ENCODE measurements at regions of chr20 and their contacts with region 1.

Region 1: DNA sequence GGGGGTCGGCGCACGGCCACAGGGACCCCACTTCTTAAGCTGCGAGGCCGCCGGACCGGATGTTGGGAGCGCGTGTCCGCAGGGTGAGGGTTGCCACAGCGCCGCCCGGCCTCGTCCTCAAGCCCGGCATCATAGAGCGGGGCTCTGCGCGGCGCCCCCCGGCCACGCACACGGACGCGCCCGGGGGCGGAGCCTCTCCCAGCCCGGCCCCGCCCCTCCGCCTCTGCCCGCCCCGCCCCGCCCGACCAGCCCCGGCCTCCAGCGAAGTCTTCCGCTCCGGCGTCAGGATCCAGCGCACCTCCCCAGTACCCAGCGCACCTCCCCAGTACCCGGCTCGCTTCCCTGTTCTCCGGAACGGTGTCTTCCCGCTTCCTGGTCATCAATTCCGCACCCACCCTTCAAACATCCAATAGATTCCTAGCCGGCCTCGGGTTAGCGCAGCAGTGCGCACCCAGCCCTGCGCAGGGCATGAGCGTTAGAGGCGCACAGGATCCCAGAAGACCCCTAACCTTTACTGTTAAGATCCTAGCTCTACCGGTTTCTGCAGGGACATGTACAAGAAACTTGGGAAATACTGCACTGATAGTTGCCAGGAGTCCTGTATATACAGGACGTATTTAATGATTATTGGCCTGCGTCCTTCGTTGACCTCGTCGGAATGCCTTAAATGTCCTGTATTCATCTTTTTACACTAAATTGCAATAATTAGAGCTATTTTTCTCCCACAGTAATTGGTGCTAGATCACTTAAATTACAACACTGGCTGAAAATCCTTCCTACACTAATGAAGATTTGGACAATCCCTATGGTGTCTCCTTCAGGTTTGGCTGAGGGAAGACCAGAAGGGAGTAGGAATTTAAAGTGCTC is 535 bp upstream of the DNAAF9 start:
- DNase-seq: peak; percentile 63
- H3K4me3 Mint-ChIP-seq: peak overlapping the region; percentile 95
- H3K27ac Mint-ChIP-seq: peak overlapping the region; percentile 93
- H3K4me1 Mint-ChIP-seq: peaks cover 32% of the 10 kb centered on the region
- H3K27me3 Mint-ChIP-seq: peaks cover 26% of the 10 kb centered on the region

Region 2: GRCh38 chr20:1663917-1664316 is 1744.1 kb before region 1 on chr20:
- intact Hi-C with region 1: loop called (anchors 10 kb)
- DNase-seq: no peak
- H3K4me3 Mint-ChIP-seq: peak overlapping the region; percentile 55
- H3K27ac Mint-ChIP-seq: peak overlapping the region; percentile 85
- H3K4me1 Mint-ChIP-seq: peaks cover 96% of the 10 kb centered on the region
- H3K27me3 Mint-ChIP-seq: no peaks in the 10 kb centered on the region

Region 3: GRCh38 chr20:3383878-3384495 is 24.0 kb before region 1 on chr20:
- intact Hi-C with region 1: loop called (anchors 1 kb)
- DNase-seq: no peak
- H3K4me3 Mint-ChIP-seq: peak overlapping the region; percentile 12
- H3K27ac Mint-ChIP-seq: peak overlapping the region; percentile 49
- H3K4me1 Mint-ChIP-seq: peaks cover 17% of the 10 kb centered on the region
- H3K27me3 Mint-ChIP-seq: no peaks in the 10 kb centered on the region

Region 4: GRCh38 chr20:3420211-3420707 is 12.3 kb after region 1 on chr20:
- intact Hi-C with region 1: loop called (anchors 1 kb)
- DNase-seq: peak; percentile 62
- H3K4me3 Mint-ChIP-seq: peak overlapping the region; percentile 40
- H3K27ac Mint-ChIP-seq: peak overlapping the region; percentile 80
- H3K4me1 Mint-ChIP-seq: peaks cover 10% of the 10 kb centered on the region
- H3K27me3 Mint-ChIP-seq: peaks cover 4% of the 10 kb centered on the region